Left cardiac atrium (tissue), 4 donors: ENCODE measurements at regions of chr13 and their contacts with region 1.

Region 1: DNA sequence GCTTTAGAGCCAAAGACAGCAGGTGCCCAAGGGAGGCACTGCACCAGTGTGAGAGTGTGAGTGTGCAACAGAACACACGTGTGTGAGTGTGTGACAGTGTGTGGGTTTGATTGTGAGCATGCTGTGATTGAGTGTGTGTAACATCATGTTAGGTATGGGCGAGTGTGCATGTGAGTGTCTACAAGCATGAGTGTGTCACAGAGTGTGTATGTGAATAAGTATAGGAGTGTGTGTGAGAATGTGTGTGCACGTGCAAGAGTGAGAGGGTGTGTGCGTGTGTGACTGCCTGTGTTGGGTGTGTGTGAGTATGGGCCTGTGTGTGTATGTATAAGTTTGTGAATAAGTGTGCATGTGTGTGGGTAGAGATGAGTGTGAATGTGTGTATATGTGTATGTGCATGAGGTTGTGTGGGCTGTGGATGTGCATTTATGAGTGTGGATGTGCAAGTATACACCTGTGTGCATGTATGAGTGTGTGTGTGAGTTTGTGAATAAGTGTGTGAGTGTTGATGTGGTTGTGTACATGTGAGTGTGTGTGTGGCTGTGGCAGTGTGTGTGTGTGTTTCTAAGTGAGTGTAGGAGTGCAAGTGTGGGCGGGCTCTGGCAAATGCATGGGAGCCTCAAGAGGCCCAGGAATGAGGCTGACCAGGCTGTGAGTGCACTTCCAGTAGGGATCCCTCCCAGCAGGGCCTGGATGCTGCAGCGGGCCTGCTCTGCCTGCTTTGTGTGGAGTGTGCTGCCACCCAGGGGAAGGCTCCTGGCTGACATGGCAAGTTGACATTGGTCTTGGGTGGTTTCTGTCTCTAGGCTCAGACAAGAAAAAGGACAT is 198.4 kb downstream of the COL4A1 start:
- DNase-seq: peak; percentile 85
- ATAC-seq: peak; percentile 92 to 93

Region 2: DNA sequence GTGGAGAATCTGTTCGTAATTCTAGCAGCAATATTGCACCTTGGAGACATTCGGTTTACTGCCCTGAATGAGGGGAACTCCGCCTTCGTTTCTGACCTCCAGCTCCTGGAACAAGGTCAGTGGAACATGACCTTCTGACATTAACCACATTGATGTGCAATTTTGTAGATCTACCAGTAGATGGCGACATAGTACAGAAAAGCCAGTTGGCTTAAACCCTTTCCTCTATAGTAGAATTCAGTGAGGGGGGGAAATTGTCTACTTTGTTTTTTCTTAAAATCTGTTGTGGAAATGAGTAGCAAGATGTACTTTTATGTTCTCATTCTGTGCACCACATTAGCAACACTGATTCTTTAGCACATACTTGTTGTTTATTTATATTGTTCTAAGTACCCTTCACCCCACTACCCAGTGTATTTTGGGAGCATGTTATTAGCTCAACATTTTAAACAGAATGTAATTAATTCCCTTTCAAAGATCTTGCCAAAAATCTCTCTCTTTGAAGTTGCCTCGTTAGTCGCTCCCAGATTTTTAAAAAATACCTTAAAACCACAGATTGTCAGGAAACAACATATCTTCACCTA is 1146.9 kb before region 1 on chr13:
- intact Hi-C with region 1: loop called in 1 of 2 experiments (anchors 5 kb)
- DNase-seq: no peak
- ATAC-seq: peak; percentile 59 to 78

Region 3: DNA sequence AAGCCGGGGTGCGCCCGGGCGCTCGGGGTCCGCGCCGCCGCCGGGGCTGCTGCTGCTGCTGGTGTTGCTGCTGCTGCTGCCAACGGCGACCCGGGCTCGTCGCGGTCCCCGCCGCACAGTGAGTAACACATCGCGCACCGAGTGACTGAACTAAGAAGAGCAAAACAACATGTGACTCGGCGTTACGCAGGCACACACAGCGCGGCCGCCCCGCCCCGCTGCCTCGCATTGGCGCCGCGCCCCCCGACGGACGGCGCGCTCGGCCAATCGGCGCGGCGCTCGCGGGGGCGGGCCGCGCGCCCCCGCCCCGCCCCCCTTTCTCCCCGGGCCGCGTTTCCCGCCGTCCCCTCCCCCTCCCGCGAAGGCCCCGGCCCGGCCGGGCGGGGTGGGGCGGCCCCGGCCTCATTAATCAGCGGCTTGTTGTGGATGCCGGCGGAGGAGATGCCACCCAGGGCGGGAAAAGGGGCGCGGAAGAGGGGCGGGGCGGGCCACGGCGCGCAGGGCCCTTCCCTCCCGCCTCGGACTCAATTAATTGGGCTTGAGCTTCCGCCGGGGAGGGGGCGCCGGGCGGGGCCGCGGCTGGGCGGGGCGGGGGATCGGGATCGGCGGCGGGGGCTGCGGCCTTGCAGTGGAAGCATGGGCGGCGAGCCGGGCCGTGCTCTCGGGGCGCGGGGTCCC is 322.0 kb before region 1 on chr13 and contains the start of gene IRS2:
- intact Hi-C with region 1: loop called (anchors 5 to 10 kb)
- DNase-seq: peak; percentile 94
- ATAC-seq: peak; percentile 83 to 86
- total RNA-seq, gene IRS2: 27.9 to 29.6 TPM

Region 4: GRCh38 chr13:109883181-109884180 is 225.1 kb before region 1 on chr13:
- intact Hi-C with region 1: loop called in 1 of 2 experiments (anchors 10 kb)
- DNase-seq: no peak
- ATAC-seq: peak; percentile 92

Region 5: DNA sequence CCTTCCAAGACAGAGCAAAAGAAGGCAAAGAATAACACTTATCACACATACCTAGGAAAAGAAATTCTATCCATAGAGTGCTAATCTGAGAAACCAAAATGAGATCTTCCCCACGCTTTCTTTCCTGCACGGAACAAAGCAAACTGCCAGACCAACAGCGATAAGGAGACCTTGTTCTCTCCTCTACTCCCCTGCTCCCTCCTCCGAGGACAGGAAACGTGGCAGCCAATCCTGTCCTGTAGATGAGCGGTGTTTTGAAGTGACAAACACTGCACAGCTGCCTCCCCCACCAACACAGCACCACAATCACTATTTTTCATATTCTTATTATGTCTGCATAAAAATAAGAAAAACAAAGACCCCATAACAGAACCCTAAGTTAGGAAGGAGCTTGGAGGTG is 208.2 kb before region 1 on chr13:
- intact Hi-C with region 1: no loop called
- DNase-seq: no peak
- ATAC-seq: peak in 1 of 2 donors; percentile 68